ENCODE measurements at regions of chr19 and their contacts with region 1.

Region 1: GRCh38 chr19:51473009-51473707 is 5.2 kb upstream of the CEACAM18 start:
- DNase-seq: peak; percentile 71 to 92 (median 79)
- H3K4me3 ChIP-seq: no peak overlapping the region
- H3K27ac ChIP-seq: no peak overlapping the region
- H3K4me1 ChIP-seq: no peaks in the 10 kb centered on the region
- H3K27me3 ChIP-seq: no peaks in the 10 kb centered on the region
- CTCF ChIP-seq: peak; percentile 66 to 90 (median 80)
- POLR2A ChIP-seq: no peak

Region 2: DNA sequence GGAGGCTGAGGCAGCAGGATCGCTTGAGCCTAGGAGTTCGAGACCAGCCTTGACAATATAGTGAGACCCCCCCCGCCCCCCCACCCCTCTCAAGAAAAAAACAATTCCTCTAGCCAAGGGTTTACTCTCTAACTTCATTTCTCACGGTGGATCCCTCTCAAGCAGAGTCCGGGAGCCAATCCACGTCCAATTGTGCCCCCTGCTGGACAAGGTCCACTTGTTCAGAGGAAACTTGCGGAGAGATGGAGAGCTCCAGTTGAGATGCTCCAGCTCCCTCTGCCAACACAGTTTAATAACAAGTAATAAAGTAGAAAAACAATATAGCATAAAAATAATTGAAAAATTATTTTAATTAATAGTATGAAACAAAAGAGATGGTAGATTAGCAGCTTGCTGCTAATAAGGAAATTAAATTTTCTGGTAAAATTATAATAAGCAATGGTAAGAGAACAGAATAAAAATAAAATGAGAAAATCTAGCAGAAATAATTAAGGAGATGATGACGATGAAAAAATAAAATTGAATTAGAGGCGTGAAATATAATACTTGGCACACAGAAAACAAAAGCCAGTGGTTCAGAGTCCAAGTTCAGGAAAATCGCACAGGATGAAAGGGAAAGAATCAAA is 187.9 kb after region 1 on chr19:
- intact Hi-C with region 1: loop called (anchors 2 to 10 kb)
- DNase-seq: peak; percentile 67 to 87 (median 84)
- H3K4me3 ChIP-seq: no peak overlapping the region
- H3K27ac ChIP-seq: no peak overlapping the region
- H3K4me1 ChIP-seq: peaks cover 0 to 8% of the 10 kb centered on the region in 2 donors
- H3K27me3 ChIP-seq: peaks cover 11% of the 10 kb centered on the region
- CTCF ChIP-seq: peak; percentile 42 to 63 (median 48)
- POLR2A ChIP-seq: no peak

Measured in adrenal gland (tissue), 19 donors.